HepG2 (cell line): ENCODE measurements at regions of chr18 and their contacts with region 1.

Region 1: GRCh38 chr18:58128381-58129374 is 84.7 kb downstream of the NEDD4L start:
- DNase-seq: peak; percentile 75
- ATAC-seq: peak; percentile 95
- H3K4me3 ChIP-seq: no peak overlapping the region
- H3K27ac ChIP-seq: peak overlapping the region; percentile 36
- H3K4me1 ChIP-seq: peaks cover 48% of the 10 kb centered on the region
- H3K27me3 ChIP-seq: no peaks in the 10 kb centered on the region
- CTCF ChIP-seq: peak; percentile 50
- EP300 ChIP-seq: no peak
- POLR2A ChIP-seq: no peak
- RAD21 ChIP-seq: no peak

Region 2: DNA sequence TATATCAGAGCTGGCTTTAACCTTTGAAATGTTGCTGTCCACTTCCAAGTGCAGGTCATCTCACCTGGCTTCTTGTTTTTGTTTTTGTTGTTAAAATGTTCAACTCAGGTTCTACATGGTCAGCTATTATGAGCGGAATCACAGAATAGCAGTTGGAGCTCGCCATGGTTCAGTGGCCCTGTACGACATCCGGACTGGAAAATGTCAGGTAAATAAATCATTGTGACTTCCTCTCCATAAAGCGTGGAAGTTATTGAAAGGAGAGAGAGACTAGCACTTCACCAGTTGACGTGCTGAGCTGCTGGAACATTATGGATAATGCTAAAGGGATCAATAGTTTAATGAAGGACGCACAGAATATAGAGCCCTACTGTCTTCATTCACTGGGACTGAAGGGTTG is 1166.4 kb before region 1 on chr18:
- CTCF ChIA-PET with region 1: no interaction called
- POLR2A ChIA-PET with region 1: no interaction called
- in situ Hi-C with region 1: no loop called
- intact Hi-C with region 1: no loop called
- DNase-seq: no peak
- ATAC-seq: no peak
- H3K4me3 ChIP-seq: no peak overlapping the region
- H3K27ac ChIP-seq: no peak overlapping the region
- H3K4me1 ChIP-seq: no peaks in the 10 kb centered on the region
- H3K27me3 ChIP-seq: no peaks in the 10 kb centered on the region
- CTCF ChIP-seq: no peak
- EP300 ChIP-seq: no peak
- POLR2A ChIP-seq: no peak
- RAD21 ChIP-seq: no peak

Region 3: GRCh38 chr18:57959278-57959677 is 169.4 kb before region 1 on chr18:
- CTCF ChIA-PET with region 1: no interaction called
- POLR2A ChIA-PET with region 1: no interaction called
- in situ Hi-C with region 1: loop called (anchors 10 kb)
- intact Hi-C with region 1: no loop called
- DNase-seq: peak; percentile 66
- ATAC-seq: peak; percentile 96
- H3K4me3 ChIP-seq: no peak overlapping the region; a peak in 1 of 6 replicates
- H3K27ac ChIP-seq: no peak overlapping the region
- H3K4me1 ChIP-seq: peaks cover 30% of the 10 kb centered on the region
- H3K27me3 ChIP-seq: no peaks in the 10 kb centered on the region
- CTCF ChIP-seq: peak; percentile 83
- EP300 ChIP-seq: no peak
- POLR2A ChIP-seq: no peak
- RAD21 ChIP-seq: peak; percentile 62; the same call in 1 of the 2 replicates

Region 4: GRCh38 chr18:58180738-58181353 is 52.2 kb after region 1 on chr18:
- CTCF ChIA-PET with region 1: no interaction called
- POLR2A ChIA-PET with region 1: no interaction called
- in situ Hi-C with region 1: no loop called
- intact Hi-C with region 1: loop called (anchors 5 kb)
- DNase-seq: peak; percentile 37
- ATAC-seq: no peak; the same call in 2 of the 3 replicates
- H3K4me3 ChIP-seq: no peak overlapping the region
- H3K27ac ChIP-seq: no peak overlapping the region
- H3K4me1 ChIP-seq: peaks cover 25% of the 10 kb centered on the region
- H3K27me3 ChIP-seq: no peaks in the 10 kb centered on the region
- CTCF ChIP-seq: peak; percentile 68
- EP300 ChIP-seq: no peak
- POLR2A ChIP-seq: no peak
- RAD21 ChIP-seq: no peak